PC-9 (cell line): ENCODE measurements at regions of chr12 and their contacts with region 1.

Region 1: DNA sequence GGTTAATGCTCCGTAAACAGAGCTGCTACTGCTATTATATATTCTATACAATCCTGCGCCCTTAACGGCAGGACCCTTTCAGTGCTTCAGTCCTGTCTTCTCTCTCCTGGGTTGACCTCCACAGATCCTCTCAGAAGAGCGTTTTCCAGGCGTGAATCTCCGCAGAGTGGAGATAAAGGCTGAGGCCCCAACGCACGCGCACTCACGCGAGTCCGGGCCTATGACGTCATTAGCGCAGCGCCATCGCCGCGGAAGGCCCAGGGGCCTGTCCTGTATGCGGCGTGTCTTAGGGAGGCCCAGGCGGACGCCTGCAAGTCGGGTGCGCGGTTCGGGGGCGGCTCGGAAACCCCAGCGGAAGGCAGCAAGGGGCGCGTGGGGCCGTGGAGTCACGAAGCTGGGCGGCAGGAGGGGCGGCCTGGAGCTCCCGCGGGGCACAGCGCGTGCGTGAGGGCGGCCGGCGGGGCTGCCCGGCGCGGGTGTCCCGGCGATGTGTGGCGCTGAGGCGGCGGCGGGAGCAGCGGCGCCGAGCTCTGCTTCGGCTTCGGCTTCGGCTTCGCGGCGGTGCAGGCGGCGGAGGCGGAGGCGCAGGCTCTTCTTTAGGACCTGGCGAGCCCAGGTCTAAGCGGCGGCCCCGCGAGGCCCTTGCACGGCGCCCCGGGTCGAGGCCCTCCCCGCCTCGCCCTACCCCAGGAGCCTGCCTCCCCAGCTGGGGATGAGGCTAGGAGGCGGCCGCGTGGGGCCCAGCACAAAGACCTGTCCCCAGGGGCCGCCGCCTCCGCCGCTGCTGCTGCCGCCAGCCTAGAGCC is at the start of gene MAPKAPK5:
- DNase-seq: peak; percentile 82 to 93
- H3K4me3 ChIP-seq: peak within 1 kb of the TSS; percentile 84
- H3K27ac ChIP-seq: peak within 1 kb of the TSS; percentile 64
- H3K4me1 ChIP-seq: peaks cover 34% of the 10 kb centered on the region
- H3K27me3 ChIP-seq: no peaks in the 10 kb centered on the region
- CTCF ChIP-seq: no peak
- total RNA-seq, gene MAPKAPK5: 45.0 and 64.7 TPM in 2 replicates

Region 2: DNA sequence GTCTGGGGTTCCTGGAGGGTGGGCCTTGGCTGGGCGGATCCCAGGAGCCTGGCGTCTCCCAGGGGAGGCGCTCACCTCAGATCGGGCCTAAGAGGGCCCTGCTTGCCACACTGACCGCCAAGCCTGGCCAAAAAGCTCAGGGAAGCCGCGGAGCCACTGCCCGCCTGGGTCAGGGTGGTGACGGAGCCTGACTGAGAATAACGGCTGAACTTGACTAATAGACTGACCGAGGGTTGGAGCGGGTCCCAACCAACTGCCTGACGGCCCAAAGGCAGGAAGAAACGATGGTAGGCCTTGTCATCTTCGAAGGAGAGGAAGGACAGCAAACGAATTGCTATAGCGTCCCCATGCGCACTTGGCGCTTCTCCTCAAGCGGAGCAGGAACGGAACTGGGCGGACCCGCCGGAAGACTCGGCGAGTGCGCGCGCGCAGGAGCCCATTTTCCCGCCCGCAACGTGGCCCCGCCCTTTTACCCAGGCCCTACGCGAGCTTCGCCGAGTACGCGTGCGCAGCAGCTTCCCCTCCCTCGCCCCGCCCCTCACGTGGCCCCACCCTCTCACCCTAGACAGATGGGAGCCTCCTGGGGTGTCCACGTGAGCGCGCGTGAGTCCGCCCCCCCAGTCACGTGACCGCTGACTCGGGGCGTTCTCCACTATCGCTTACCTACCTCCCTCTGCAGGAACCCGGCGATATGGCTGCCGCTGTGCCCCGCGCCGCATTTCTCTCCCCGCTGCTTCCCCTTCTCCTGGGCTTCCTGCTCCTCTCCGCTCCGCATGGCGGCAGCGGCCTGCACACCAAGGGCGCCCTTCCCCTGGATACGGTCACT is 171.0 kb after region 1 on chr12 and contains the starts of genes ERP29 and TMEM116:
- CTCF ChIA-PET with region 1: no interaction called
- POLR2A ChIA-PET with region 1: no interaction called
- intact Hi-C with region 1: loop called (anchors 5 kb)
- DNase-seq: peak; percentile 91 to 98
- H3K4me3 ChIP-seq: peak within 1 kb of the TSS; percentile 86
- H3K27ac ChIP-seq: peak within 1 kb of the TSS; percentile 88
- H3K4me1 ChIP-seq: peaks cover 36% of the 10 kb centered on the region
- H3K27me3 ChIP-seq: no peaks in the 10 kb centered on the region
- CTCF ChIP-seq: peak; percentile 68
- total RNA-seq, gene ERP29: 131 and 154 TPM in 2 replicates
- total RNA-seq, gene TMEM116: 21.9 and 23.4 TPM in 2 replicates

Region 3: GRCh38 chr12:112252184-112252583 is 410.2 kb after region 1 on chr12:
- CTCF ChIA-PET with region 1: no interaction called
- POLR2A ChIA-PET with region 1: interaction called, 10 read pairs
- intact Hi-C with region 1: no loop called
- DNase-seq: no peak
- H3K4me3 ChIP-seq: no peak overlapping the region
- H3K27ac ChIP-seq: no peak overlapping the region
- H3K4me1 ChIP-seq: no peaks in the 10 kb centered on the region
- H3K27me3 ChIP-seq: no peaks in the 10 kb centered on the region
- CTCF ChIP-seq: no peak

Region 4: GRCh38 chr12:113271853-113272561 is 1430.1 kb after region 1 on chr12:
- CTCF ChIA-PET with region 1: no interaction called
- POLR2A ChIA-PET with region 1: no interaction called
- intact Hi-C with region 1: no loop called
- DNase-seq: no peak
- H3K4me3 ChIP-seq: no peak overlapping the region
- H3K27ac ChIP-seq: no peak overlapping the region
- H3K4me1 ChIP-seq: no peaks in the 10 kb centered on the region
- H3K27me3 ChIP-seq: no peaks in the 10 kb centered on the region
- CTCF ChIP-seq: no peak